Activated T-helper 1 cell treated with anti-CD3 and anti-CD28 coated beads, Interleukin-12 subunit alpha, Interleukin-12 subunit beta, Interleukin-2, Interleukin-4 antibody, amounts not matched to agents 30 ng/mL and 10 ng/mL and 1 ng/mL, durations not matched to agents 14 hours and 24 hours and 36 hours (primary cell): ENCODE measurements at regions of chr4 and their contacts with region 1.

Region 1: DNA sequence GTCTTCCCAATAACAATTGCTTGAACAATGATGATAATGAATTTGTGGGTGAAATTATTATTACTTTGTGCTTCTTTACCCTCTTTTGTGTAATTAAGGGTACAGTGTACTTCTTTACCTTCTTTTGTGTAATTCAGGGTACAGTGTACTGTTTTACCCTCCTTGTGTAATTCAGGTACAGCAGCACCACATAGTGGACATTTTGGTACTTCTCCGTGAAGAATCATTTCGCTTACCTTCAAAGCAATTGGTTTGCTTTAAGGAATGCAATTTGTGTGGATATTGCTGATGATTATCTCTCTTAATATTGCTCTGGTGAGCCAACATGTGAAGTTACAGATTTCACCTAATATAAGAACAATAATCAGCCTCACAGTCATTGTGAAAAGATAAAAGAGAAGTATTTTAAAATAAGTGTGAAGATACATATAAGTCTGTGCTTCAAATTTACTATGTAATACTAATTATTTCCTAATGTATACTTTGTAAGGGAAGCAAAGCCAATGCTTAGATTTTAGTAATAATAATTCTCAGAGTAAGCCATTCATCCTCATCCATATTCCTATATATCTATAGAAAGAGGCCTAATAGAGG is 27.2 kb upstream of the SEC24B start:
- DNase-seq: peak; percentile 20
- H3K4me3 Mint-ChIP-seq: no peak overlapping the region
- H3K27ac Mint-ChIP-seq: no peak overlapping the region
- H3K4me1 Mint-ChIP-seq: no peaks in the 10 kb centered on the region
- H3K27me3 Mint-ChIP-seq: peaks cover 13% of the 10 kb centered on the region

Region 2: DNA sequence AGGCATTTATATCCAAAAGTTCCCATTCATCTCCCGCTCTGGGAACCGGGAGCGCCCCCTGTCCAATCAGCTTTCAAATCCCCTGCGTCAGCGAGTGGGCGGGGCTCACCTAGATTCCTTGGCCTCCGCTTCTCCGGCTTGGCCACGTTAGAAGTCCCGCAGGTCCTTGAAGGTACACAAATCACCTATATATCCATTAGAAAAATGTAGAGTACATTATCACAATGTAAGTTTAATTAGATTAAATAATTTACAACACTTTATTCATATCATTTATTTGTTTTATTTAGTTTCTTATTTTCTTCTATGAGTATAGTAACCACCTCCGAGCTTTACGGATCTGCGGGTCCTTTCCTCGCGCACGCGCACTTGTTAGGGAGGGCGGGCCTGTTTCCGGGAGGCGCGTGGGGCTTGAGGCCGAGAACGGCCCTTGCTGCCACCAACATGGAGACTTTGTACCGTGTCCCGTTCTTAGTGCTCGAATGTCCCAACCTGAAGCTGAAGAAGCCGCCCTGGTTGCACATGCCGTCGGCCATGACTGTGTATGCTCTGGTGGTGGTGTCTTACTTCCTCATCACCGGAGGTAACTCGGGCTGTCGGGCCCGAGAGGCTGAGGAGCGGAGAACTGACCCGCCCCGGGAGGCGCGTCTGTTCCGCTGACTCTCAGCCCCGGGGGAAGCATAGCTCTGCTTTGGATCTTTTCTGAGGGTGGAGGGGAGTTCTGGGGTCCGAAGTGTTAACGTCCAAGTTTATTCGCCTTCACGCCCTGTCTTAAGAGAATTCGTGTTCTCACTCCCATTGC is 756.0 kb before region 1 on chr4 and contains the start of gene OSTC:
- intact Hi-C with region 1: loop called (anchors 10 kb)
- DNase-seq: peak; percentile 90
- H3K4me3 Mint-ChIP-seq: peak within 1 kb of the TSS; percentile 99
- H3K27ac Mint-ChIP-seq: peak within 1 kb of the TSS; percentile 93
- H3K4me1 Mint-ChIP-seq: peaks cover 39% of the 10 kb centered on the region
- H3K27me3 Mint-ChIP-seq: no peaks in the 10 kb centered on the region
- total RNA-seq, gene OSTC: 96.1 and 96.7 TPM in 2 replicates

Region 3: DNA sequence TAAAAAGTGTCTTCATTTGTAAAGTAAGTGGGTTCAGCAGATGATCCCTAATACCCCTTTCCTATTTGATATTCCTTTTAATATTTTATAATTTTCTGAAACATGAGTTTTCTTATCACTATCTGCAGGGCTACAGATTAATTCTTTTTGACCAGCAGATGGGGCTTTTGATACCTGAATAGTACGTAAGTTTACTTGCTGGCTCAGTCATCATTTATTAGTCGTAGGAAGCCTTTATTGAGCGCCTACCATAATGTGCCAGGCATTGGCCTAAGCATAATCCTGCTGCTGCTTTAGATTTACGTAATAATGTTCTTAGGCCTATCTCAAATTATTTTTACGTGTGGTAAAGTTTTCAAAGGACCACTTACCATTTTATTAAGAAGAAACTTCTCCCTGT is 723.0 kb before region 1 on chr4:
- intact Hi-C with region 1: loop called (anchors 10 kb)
- DNase-seq: no peak
- H3K4me3 Mint-ChIP-seq: no peak overlapping the region
- H3K27ac Mint-ChIP-seq: no peak overlapping the region
- H3K4me1 Mint-ChIP-seq: no peaks in the 10 kb centered on the region
- H3K27me3 Mint-ChIP-seq: no peaks in the 10 kb centered on the region

Region 4: GRCh38 chr4:108834835-108835384 is 571.5 kb before region 1 on chr4:
- intact Hi-C with region 1: loop called (anchors 1 kb)
- DNase-seq: no peak
- H3K4me3 Mint-ChIP-seq: no peak overlapping the region
- H3K27ac Mint-ChIP-seq: no peak overlapping the region
- H3K4me1 Mint-ChIP-seq: peaks cover 8% of the 10 kb centered on the region
- H3K27me3 Mint-ChIP-seq: peaks cover 5% of the 10 kb centered on the region

Region 5: DNA sequence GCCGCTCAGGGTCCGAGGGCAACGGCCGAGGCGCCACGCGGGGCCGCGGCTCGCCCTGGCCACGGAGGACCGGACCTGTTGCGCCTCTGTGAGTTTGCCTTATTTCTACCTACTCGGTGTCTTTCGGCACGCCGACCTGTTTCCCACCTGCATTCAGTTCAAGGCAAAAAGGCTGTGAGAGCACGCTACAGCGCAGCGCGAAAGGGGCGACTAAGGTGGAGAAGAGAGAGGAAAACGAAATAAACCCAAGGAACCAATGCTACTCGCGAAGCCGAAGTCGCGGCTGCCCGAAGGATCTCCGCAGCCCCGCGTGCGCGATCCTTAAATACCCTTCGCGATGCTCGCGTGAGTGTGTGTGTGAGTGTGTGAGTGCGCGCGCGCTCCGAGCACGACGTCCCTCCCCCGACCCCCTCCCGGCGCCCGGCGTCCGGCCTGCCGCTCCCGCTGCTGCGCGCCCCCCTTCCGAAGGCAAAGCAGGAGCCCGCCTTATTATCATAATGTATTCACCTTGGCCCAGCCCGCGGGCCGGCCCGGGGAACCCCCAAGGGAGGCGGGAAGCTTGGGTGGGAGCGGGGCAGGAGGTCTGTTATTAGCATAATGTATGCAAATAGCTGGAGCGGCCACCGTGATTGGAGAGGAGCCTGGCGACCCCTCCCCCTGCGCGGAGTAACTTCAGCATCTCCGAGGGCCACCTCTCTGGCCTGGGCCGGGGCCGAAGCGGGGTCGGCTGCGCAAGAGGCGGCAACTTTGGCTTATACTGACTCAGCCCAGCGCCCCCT is 103.9 kb before region 1 on chr4 and contains the start of gene COL25A1:
- intact Hi-C with region 1: loop called (anchors 5 kb)
- DNase-seq: peak; percentile 21
- H3K4me3 Mint-ChIP-seq: peak within 1 kb of the TSS; percentile 68
- H3K27ac Mint-ChIP-seq: no peak within 1 kb of the TSS
- H3K4me1 Mint-ChIP-seq: no peaks in the 10 kb centered on the region
- H3K27me3 Mint-ChIP-seq: peaks cover 66% of the 10 kb centered on the region
- total RNA-seq, gene COL25A1: not detected in 2 replicates